ENCODE measurements at regions of chr4 and their contacts with region 1.

Region 1: GRCh38 chr4:40736910-40737309 is 12.8 kb upstream of the NSUN7 start:
- DNase-seq: peak in 1 of 2 donors; percentile 65
- H3K4me3 ChIP-seq: no peak overlapping the region
- H3K27ac ChIP-seq: no peak overlapping the region
- H3K4me1 ChIP-seq: peaks cover 0 to 12% (median 1%) of the 10 kb centered on the region in 4 donors
- H3K27me3 ChIP-seq: no peaks in the 10 kb centered on the region
- CTCF ChIP-seq: peak in 2 of 7 experiments; percentile 23 to 29
- EP300 ChIP-seq: no peak
- POLR2A ChIP-seq: no peak

Region 2: GRCh38 chr4:40897557-40898203 is 160.8 kb after region 1 on chr4:
- intact Hi-C with region 1: loop called (anchors 5 kb)
- DNase-seq: peak; percentile 75 to 90
- H3K4me3 ChIP-seq: no peak overlapping the region
- H3K27ac ChIP-seq: no peak overlapping the region
- H3K4me1 ChIP-seq: peaks cover 0 to 9% (median 3%) of the 10 kb centered on the region in 4 donors
- H3K27me3 ChIP-seq: no peaks in the 10 kb centered on the region
- CTCF ChIP-seq: peak in 5 of 7 experiments; percentile 19 to 83 (median 75)
- EP300 ChIP-seq: no peak
- POLR2A ChIP-seq: no peak

Region 3: DNA sequence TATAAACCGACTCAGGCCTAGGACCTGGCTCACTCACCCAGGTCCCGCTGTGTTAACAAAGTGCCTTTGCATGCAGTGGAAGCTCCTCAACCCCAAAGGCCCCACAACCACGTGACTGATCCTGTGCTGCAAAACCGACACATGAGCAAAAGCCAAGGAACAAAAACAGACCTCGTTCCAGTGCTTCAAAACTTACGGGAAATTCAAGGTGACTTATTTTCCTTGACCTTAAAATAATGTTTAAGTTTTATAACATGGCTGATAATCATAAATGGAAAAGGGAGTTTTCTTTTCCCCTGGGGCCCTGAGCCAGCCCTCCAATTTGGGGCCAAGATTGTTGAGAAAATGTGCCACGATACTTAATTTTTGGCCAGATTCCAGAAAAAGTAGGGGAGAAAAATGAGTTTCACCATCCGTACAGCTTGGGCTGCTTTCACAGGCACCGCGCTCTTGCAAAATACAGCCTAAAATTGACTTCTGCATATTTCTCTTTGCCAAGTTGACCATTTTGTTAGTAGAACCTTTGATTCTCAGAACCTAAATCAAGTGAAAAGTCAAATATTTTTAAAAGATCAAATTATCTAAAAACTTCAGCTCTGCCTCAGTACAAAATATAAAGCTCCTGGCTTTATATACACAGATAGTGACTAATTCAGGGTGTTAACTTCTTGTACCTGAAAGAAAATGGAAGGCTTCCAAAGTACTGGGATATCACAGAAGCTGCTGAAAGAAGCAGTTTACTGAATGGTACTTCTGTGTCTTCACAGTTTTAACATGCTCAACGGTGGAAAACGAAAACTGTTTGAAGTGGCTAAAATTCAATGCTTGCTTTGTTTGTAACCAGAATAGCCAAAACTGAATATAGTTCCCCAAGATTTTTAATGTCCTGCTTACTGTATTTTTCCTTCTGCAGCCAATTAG is 383.6 kb after region 1 on chr4:
- intact Hi-C with region 1: no loop called
- DNase-seq: peak; percentile 62 to 77
- H3K4me3 ChIP-seq: peak overlapping the region in 1 of 4 donors; percentile 17
- H3K27ac ChIP-seq: peak overlapping the region; percentile 46 to 75 (median 64)
- H3K4me1 ChIP-seq: peaks cover 9 to 65% (median 44%) of the 10 kb centered on the region in 4 donors
- H3K27me3 ChIP-seq: no peaks in the 10 kb centered on the region
- CTCF ChIP-seq: no peak
- EP300 ChIP-seq: peak; percentile 7
- POLR2A ChIP-seq: no peak